Thyroid gland (tissue), 4 donors: ENCODE measurements at regions of chr12 and their contacts with region 1.

Region 1: DNA sequence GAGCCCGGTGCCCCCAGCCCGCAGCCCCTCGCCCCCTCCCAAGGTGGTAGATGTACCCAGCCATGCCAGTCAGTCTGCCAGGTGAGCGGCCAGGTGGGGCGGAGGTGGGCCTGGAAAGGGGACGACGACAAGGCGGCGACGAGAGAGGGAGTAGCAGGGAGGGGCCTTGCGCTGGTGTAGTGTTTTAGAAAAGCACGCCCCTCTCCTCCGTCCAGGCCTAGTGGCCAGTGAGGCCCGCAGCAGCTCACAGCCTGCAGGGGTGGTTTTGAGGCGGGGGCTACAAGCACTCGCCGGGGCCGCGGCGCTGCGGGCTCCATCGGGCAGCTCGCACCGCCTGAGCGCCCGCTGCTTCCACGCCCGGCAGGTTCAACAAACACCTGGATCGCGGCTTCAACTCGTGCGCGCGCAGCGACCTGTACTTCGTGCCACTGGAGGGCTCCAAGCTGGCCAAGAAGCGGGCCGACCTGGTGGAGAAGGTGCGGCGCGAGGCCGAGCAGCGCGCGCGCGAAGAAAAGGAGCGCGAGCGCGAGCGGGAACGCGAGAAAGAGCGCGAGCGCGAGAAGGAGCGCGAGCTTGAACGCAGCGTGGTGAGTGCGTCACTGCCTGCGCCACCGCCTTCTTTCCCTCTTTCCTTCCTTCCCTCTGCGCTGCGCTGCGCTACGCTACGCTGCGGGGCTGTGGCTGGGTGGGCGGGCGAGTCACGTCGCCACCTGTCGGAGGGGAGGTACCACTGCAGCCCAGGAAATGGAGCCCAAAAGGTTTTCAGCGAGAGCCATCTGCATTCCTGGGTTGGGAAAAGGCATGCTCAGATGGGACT is 5.9 kb upstream of the RNU7-1 start:
- DNase-seq: peak; percentile 94
- H3K4me3 ChIP-seq: peak overlapping the region in 2 of 3 donors; percentile 16 to 46
- H3K27ac ChIP-seq: peak overlapping the region; percentile 90 to 96 (median 93)
- H3K4me1 ChIP-seq: peaks cover 20 to 38% of the 10 kb centered on the region in 2 donors
- H3K27me3 ChIP-seq: no peaks in the 10 kb centered on the region
- CTCF ChIP-seq: peak; percentile 89 to 98 (median 94)
- POLR2A ChIP-seq: peak in 1 of 2 donors; percentile 86

Region 2: DNA sequence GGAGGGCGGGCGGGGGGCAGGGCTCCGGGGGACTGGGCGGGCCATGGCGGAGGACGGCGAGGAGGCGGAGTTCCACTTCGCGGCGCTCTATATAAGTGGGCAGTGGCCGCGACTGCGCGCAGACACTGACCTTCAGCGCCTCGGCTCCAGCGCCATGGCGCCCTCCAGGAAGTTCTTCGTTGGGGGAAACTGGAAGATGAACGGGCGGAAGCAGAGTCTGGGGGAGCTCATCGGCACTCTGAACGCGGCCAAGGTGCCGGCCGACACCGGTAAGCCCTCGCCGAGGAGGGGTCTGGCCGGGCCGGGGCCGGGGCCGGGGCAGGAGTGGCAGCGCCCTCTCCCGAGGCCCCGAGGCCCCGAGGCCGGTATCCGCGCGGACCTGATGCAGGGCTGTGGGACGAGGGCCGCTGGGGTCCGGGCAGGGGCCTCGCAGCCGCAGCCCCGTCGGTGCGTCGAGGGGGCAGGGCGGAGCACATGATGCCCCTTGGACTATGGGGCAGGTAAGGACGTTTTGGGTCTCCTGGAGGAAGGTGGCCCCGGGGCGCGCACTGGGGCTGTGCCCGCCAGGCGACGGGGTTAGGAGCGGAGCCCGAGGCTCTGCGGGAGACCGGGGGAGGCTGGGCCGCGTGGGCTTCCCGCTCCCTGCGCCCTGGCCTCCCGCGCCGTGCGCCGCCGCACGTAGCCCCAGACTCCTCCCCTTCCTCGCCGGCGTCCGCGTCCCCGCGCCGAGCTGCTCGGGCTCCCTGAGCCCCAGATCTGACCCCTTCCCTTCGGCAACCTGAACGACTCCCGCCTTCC is 70.1 kb before region 1 on chr12 and contains the start of gene TPI1:
- intact Hi-C with region 1: loop called (anchors 2 kb)
- DNase-seq: peak; percentile 80 to 81
- H3K4me3 ChIP-seq: peak within 1 kb of the TSS; percentile 61 to 100 (median 99)
- H3K27ac ChIP-seq: peak within 1 kb of the TSS; percentile 84 to 98 (median 92)
- H3K4me1 ChIP-seq: peaks cover 26 to 37% of the 10 kb centered on the region in 2 donors
- H3K27me3 ChIP-seq: no peaks in the 10 kb centered on the region
- CTCF ChIP-seq: no peak
- POLR2A ChIP-seq: peak; percentile 95 to 99
- total RNA-seq, gene TPI1: 363 to 700 (median 468) TPM

Region 3: DNA sequence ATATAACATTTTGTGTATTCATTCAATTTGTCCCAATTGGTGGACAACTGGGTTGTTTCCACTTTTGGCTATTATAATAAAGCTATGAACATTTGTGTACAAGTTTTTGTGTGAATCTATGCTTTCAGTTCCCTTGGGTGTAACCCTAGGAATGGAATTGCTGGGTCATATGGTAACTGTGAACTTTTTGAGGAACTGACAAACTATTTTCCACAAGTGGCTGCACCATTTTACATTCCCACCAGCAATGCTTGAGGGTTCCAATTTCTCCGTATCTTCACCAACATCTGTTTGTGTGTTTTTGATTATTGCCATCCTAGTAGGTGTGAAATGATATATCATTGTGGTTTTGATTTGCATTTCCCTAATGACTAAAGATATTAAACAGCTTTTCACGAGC is 67.6 kb after region 1 on chr12:
- intact Hi-C with region 1: no loop called
- DNase-seq: no peak
- H3K4me3 ChIP-seq: no peak overlapping the region
- H3K27ac ChIP-seq: no peak overlapping the region
- H3K4me1 ChIP-seq: peaks cover 4 to 5% of the 10 kb centered on the region in 2 donors
- H3K27me3 ChIP-seq: no peaks in the 10 kb centered on the region
- CTCF ChIP-seq: no peak
- POLR2A ChIP-seq: no peak